PC-9 (cell line): ENCODE measurements at regions of chr17 and their contacts with region 1.

Region 1: DNA sequence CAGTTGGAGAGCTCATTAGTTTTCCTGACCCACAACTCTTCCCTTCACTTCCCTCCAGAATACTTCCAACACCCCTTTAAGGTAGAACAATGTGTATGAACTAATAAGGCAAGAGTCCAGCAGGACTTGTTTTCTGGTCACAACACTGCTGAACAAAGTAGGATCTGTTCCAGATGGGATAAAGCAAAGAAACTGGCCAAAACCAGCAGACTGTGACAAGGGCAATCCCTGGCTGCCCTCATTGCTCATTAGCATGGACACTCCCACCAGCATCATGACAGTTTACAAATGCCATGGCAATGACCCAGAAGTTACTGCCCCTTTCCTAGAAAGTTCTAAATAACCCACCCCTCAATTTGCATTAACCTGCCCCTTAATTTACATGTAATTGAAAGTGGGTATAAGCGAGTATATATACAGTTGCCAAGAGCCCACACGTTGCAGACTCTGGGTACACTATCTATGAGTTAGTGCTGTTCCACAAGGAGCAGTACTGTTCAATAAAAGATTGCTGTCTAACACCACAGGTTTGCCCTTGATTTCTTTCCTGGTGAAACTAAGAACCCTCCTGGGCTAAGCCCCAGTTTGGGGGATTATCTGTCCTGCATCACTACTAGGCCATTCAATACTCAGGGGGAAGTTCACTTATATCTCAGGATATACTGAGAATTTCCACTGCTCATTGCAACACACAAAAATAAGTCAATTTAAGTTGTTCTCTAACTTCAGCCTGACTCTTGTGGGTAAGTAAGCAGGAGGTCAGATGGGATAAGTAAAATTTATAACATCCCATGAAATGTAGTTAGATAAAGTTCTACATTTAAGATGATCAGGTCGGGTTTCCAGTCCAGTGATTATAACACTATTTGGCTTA is 82.3 kb downstream of the SSH2 start:
- DNase-seq: no peak
- H3K4me3 ChIP-seq: no peak overlapping the region
- H3K27ac ChIP-seq: no peak overlapping the region
- H3K4me1 ChIP-seq: peaks cover 8% of the 10 kb centered on the region; the same call in 1 of the 2 replicates
- H3K27me3 ChIP-seq: no peaks in the 10 kb centered on the region
- CTCF ChIP-seq: no peak

Region 2: DNA sequence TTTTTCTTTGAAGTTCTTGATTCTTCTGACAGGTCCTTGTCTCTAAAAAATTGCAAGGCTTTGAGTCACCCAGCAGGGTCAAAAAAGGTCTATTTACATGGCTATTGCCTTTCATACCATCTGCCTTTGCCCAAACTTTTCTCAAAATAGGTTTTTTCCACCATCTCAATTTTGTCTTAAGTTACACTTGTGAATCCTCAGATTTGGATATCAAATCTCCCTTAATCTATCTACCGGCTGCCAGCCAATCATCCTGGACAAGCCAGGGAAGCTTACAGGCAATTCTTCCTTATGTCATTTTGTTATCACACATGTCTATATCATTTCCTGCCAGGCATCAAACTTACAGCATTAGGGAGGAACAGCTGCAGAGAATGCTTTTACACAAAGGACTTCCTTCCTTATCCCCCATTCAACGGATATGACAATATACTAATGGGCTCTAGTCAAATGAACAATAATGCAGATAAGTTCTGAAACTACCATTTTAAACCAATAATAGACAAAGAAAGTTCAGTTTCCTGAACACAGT is 121.0 kb before region 1 on chr17:
- CTCF ChIA-PET with region 1: no interaction called
- POLR2A ChIA-PET with region 1: no interaction called
- intact Hi-C with region 1: no loop called
- DNase-seq: no peak
- H3K4me3 ChIP-seq: no peak overlapping the region
- H3K27ac ChIP-seq: no peak overlapping the region
- H3K4me1 ChIP-seq: peaks cover 12% of the 10 kb centered on the region
- H3K27me3 ChIP-seq: no peaks in the 10 kb centered on the region
- CTCF ChIP-seq: no peak

Region 3: GRCh38 chr17:29821897-29822296 is 25.9 kb before region 1 on chr17:
- CTCF ChIA-PET with region 1: no interaction called
- POLR2A ChIA-PET with region 1: no interaction called
- intact Hi-C with region 1: no loop called
- DNase-seq: no peak
- H3K4me3 ChIP-seq: no peak overlapping the region
- H3K27ac ChIP-seq: no peak overlapping the region
- H3K4me1 ChIP-seq: peaks cover 15% of the 10 kb centered on the region
- H3K27me3 ChIP-seq: no peaks in the 10 kb centered on the region
- CTCF ChIP-seq: no peak

Region 4: GRCh38 chr17:29883497-29883896 is 35.7 kb after region 1 on chr17:
- CTCF ChIA-PET with region 1: no interaction called
- POLR2A ChIA-PET with region 1: interaction called, 26 read pairs
- intact Hi-C with region 1: no loop called
- DNase-seq: no peak
- H3K4me3 ChIP-seq: no peak overlapping the region
- H3K27ac ChIP-seq: no peak overlapping the region
- H3K4me1 ChIP-seq: no peaks in the 10 kb centered on the region
- H3K27me3 ChIP-seq: no peaks in the 10 kb centered on the region
- CTCF ChIP-seq: no peak

Region 5: DNA sequence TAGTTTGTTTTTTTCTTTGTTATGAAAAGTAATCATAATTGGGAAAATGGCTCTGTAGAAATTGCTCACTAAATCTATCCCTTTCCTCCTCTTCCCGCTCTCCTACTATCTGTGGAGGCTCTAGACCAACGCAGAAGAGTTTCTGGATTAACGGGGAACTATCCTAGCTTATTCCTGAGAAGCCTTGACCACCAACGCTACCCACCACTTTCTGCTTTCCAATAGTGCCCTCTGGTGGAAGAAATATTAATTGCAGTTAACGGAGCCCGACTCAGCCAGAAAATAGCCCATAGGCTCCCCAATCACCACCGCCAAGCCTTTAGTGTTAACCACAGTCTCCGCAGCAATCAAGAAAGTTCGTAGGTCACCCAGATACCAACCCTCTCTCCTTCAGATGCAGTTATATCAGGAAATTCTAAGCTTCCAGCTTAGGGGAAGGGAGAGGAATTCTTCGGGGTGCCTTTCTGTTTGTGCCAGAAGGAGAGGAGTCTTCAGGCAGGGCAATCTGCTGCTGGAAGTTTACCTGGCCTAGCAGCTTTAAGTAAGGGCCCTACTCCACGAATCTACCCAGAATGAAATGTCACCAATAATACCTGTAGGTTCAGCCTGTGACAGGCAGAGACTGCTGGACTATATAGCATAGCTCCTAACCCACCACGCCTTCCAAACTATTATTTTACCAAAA is 245.8 kb after region 1 on chr17:
- CTCF ChIA-PET with region 1: no interaction called
- POLR2A ChIA-PET with region 1: no interaction called
- intact Hi-C with region 1: no loop called
- DNase-seq: peak; percentile 40 to 56
- H3K4me3 ChIP-seq: no peak overlapping the region
- H3K27ac ChIP-seq: no peak overlapping the region
- H3K4me1 ChIP-seq: no peaks in the 10 kb centered on the region
- H3K27me3 ChIP-seq: 0 out of 2 replicates have a peak, but pooled peaks cover 5% of the 10 kb centered on the region
- CTCF ChIP-seq: peak; percentile 95

Region 6: DNA sequence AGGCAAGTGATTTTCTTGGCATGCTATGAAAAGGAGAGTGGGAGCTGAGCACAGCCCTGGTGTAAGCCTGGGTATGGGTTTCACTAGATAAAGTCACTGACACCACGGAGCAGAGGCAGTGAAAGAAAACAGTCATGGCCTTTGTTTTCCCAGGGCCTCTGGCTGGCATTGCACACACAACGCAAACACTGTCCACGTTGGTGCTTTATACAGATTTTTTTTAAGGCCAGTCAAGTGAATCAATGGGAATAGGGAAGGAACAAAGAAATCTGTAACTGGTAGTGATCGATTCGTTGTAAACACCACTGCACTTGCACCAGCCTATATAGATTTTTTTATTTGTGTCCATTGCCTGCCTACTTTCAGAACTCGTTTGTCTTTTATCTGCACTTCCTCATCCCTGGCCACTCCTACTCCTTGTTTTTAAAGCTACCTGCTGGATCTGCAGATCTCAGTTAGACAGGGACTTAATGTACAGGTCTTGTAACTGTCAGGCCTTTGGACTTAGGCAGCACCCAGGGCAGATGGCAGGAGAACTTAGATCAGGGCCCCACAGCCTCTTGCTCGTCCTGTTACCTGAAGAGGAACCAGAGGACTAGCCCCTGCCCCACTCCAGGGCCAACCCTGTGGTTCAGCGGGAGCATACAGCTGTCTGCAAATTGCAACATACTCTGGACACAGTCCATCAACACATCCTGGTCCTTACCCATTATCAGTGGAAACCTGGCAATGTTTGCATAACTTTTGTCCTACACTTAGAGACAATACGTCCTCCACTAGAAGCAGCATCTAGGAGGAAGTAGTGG is 496.7 kb after region 1 on chr17:
- CTCF ChIA-PET with region 1: no interaction called
- POLR2A ChIA-PET with region 1: no interaction called
- intact Hi-C with region 1: no loop called
- DNase-seq: peak; percentile 68 to 98
- H3K4me3 ChIP-seq: peak overlapping the region; percentile 33; the same call in 1 of the 2 replicates
- H3K27ac ChIP-seq: peak overlapping the region; percentile 96
- H3K4me1 ChIP-seq: peaks cover 64% of the 10 kb centered on the region
- H3K27me3 ChIP-seq: no peaks in the 10 kb centered on the region
- CTCF ChIP-seq: no peak